Stomach (tissue), 19 donors: ENCODE measurements at regions of chr1 and their contacts with region 1.

Region 1: GRCh38 chr1:59952065-59952464 is 25.5 kb upstream of the CYP2J2 start:
- DNase-seq: no peak
- H3K4me3 ChIP-seq: no peak overlapping the region
- H3K27ac ChIP-seq: no peak overlapping the region
- H3K4me1 ChIP-seq: peaks cover 0 to 6% (median under 1%) of the 10 kb centered on the region in 4 donors
- H3K27me3 ChIP-seq: no peaks in the 10 kb centered on the region
- CTCF ChIP-seq: no peak
- EP300 ChIP-seq: no peak
- POLR2A ChIP-seq: no peak

Region 2: GRCh38 chr1:59672851-59673572 is 279.1 kb before region 1 on chr1:
- intact Hi-C with region 1: no loop called
- DNase-seq: no peak
- H3K4me3 ChIP-seq: no peak overlapping the region
- H3K27ac ChIP-seq: peak overlapping the region in 4 of 5 donors; percentile 56 to 78 (median 70)
- H3K4me1 ChIP-seq: peaks cover 13 to 33% (median 29%) of the 10 kb centered on the region in 4 donors
- H3K27me3 ChIP-seq: no peaks in the 10 kb centered on the region
- CTCF ChIP-seq: no peak
- EP300 ChIP-seq: no peak
- POLR2A ChIP-seq: no peak

Region 3: DNA sequence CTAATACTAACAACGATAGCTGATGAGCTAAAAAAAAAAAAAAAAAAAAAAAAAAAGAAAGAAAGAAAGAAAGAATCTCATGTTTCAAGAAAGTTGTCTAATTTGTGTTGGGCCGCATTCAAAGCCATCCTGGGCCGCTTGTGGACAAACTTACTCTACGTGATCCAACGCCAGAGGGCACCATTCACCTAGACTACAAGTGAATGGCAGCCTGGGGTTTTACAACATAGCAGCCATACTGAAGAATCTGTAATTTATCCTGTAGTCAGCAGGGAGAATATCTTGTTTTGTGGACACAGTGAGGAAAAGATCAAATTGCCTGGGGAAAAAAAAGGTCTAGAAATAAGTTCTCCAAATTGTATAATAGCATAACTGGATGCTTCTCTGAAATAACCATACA is 72.5 kb before region 1 on chr1:
- intact Hi-C with region 1: loop called (anchors 5 kb)
- DNase-seq: peak; percentile 87 to 92
- H3K4me3 ChIP-seq: no peak overlapping the region
- H3K27ac ChIP-seq: no peak overlapping the region
- H3K4me1 ChIP-seq: no peaks in the 10 kb centered on the region
- H3K27me3 ChIP-seq: no peaks in the 10 kb centered on the region
- CTCF ChIP-seq: peak in 4 of 7 experiments; percentile 45 to 73 (median 52)
- EP300 ChIP-seq: no peak
- POLR2A ChIP-seq: no peak

Region 4: GRCh38 chr1:60088620-60089155 is 136.6 kb after region 1 on chr1:
- intact Hi-C with region 1: no loop called
- DNase-seq: peak in 1 of 2 donors; percentile 14
- H3K4me3 ChIP-seq: no peak overlapping the region
- H3K27ac ChIP-seq: no peak overlapping the region
- H3K4me1 ChIP-seq: no peaks in the 10 kb centered on the region
- H3K27me3 ChIP-seq: no peaks in the 10 kb centered on the region
- CTCF ChIP-seq: no peak
- EP300 ChIP-seq: no peak
- POLR2A ChIP-seq: no peak